Psoas muscle (tissue), 8 donors: ENCODE measurements at regions of chr4 and their contacts with region 1.

Region 1: GRCh38 chr4:153750197-153750817 is 9.5 kb downstream of the RNF175 start:
- DNase-seq: no peak
- ATAC-seq: peak; percentile 44 to 70 (median 58)
- H3K4me3 ChIP-seq: no peak overlapping the region
- H3K27ac ChIP-seq: no peak overlapping the region
- H3K4me1 ChIP-seq: no peaks in the 10 kb centered on the region
- H3K27me3 ChIP-seq: no peaks in the 10 kb centered on the region
- CTCF ChIP-seq: peak; percentile 48

Region 2: GRCh38 chr4:152943672-152944071 is 806.6 kb before region 1 on chr4:
- intact Hi-C with region 1: no loop called
- DNase-seq: no peak
- ATAC-seq: peak; percentile 37 to 69 (median 48)
- H3K4me3 ChIP-seq: no peak overlapping the region
- H3K27ac ChIP-seq: peak overlapping the region; percentile 50
- H3K4me1 ChIP-seq: no peaks in the 10 kb centered on the region
- H3K27me3 ChIP-seq: peaks cover 0 to 18% (median 9%) of the 10 kb centered on the region in 3 donors
- CTCF ChIP-seq: no peak

Region 3: GRCh38 chr4:153634738-153635353 is 115.5 kb before region 1 on chr4:
- intact Hi-C with region 1: loop called (anchors 5 to 10 kb)
- DNase-seq: no peak
- ATAC-seq: peak in 2 of 4 donors; percentile 44 to 50
- H3K4me3 ChIP-seq: no peak overlapping the region
- H3K27ac ChIP-seq: no peak overlapping the region
- H3K4me1 ChIP-seq: no peaks in the 10 kb centered on the region
- H3K27me3 ChIP-seq: no peaks in the 10 kb centered on the region
- CTCF ChIP-seq: peak; percentile 63